Mammary epithelial cell (primary cell): ENCODE measurements at regions of chr10 and their contacts with region 1.

Region 1: GRCh38 chr10:86899670-86900276 is 57.6 kb downstream of the MMRN2 start:
- DNase-seq: peak; percentile 44
- H3K4me3 ChIP-seq: no peak overlapping the region
- H3K27ac ChIP-seq: no peak overlapping the region
- H3K4me1 ChIP-seq: no peaks in the 10 kb centered on the region
- H3K27me3 ChIP-seq: no peaks in the 10 kb centered on the region
- CTCF ChIP-seq: peak; percentile 72 to 88

Region 2: GRCh38 chr10:86693721-86694369 is 205.9 kb before region 1 on chr10:
- CTCF ChIA-PET with region 1: no interaction called
- dilution Hi-C with region 1: no loop called
- in situ Hi-C with region 1: loop called in 1 of 2 experiments (anchors 5 kb)
- intact Hi-C with region 1: loop called (anchors 1 kb)
- DNase-seq: no peak
- H3K4me3 ChIP-seq: no peak overlapping the region
- H3K27ac ChIP-seq: no peak overlapping the region
- H3K4me1 ChIP-seq: no peaks in the 10 kb centered on the region
- H3K27me3 ChIP-seq: no peaks in the 10 kb centered on the region
- CTCF ChIP-seq: peak; percentile 58 to 66

Region 3: GRCh38 chr10:86699991-86700840 is 199.6 kb before region 1 on chr10:
- CTCF ChIA-PET with region 1: no interaction called
- dilution Hi-C with region 1: loop called (anchors 10 kb)
- in situ Hi-C with region 1: loop called (anchors 5 kb)
- intact Hi-C with region 1: no loop called
- DNase-seq: no peak
- H3K4me3 ChIP-seq: no peak overlapping the region
- H3K27ac ChIP-seq: no peak overlapping the region
- H3K4me1 ChIP-seq: no peaks in the 10 kb centered on the region
- H3K27me3 ChIP-seq: no peaks in the 10 kb centered on the region
- CTCF ChIP-seq: no peak

Region 4: GRCh38 chr10:86775056-86775869 is 124.5 kb before region 1 on chr10:
- CTCF ChIA-PET with region 1: no interaction called
- dilution Hi-C with region 1: no loop called
- in situ Hi-C with region 1: no loop called
- intact Hi-C with region 1: no loop called
- DNase-seq: peak; percentile 36
- H3K4me3 ChIP-seq: no peak overlapping the region
- H3K27ac ChIP-seq: peak overlapping the region; percentile 7
- H3K4me1 ChIP-seq: peaks cover 12% of the 10 kb centered on the region
- H3K27me3 ChIP-seq: no peaks in the 10 kb centered on the region
- CTCF ChIP-seq: no peak